ENCODE measurements at regions of chr1 and their contacts with region 1.

Region 1: GRCh38 chr1:100249537-100250257 is at the start of gene DBT:
- DNase-seq: peak; percentile 86 to 98
- H3K4me3 ChIP-seq: peak within 1 kb of the TSS; percentile 57 to 85
- H3K27ac ChIP-seq: peak within 1 kb of the TSS; percentile 85 to 86
- H3K4me1 ChIP-seq: no peaks in the 10 kb centered on the region
- H3K27me3 ChIP-seq: no peaks in the 10 kb centered on the region
- CTCF ChIP-seq: no peak
- total RNA-seq, gene DBT: 2.3 TPM

Region 2: DNA sequence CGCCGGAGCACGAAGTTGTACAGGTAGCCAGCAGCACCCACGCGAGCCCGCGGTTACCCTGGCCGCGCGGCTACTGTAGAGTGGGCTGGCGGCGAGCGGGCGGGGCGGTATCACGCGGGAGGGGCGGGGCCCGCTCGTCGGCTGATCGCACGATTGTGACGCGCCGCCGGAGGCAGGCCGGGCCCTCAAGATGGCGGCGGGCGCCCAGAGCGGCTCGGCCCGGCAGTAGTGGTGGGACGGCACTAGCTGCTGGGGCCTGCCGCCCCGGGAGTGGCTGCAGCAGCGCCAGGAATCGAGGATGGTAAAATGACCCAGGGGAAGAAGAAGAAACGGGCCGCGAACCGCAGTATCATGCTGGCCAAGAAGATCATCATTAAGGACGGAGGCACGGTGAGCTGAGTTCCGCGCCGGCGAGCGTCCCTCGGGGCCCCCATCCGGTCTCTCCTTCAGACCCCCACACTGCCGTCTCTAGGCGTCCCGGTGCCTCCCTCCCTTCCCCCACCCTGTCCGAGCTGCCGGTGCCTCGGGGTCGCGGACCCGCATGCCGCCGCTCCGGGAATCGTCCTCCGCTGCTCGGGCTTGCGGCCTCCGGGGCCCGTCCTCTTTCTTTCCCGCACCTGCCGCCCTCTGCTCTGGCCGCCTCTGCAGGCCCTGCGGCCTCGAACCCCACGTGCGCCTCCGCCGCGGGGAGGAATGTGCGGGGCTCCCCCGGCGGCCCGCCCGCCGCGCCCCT is 211.6 kb before region 1 on chr1:
- intact Hi-C with region 1: loop called (anchors 1 kb)
- DNase-seq: peak; percentile 59 to 95
- H3K4me3 ChIP-seq: peak overlapping the region; percentile 93 to 94
- H3K27ac ChIP-seq: peak overlapping the region; percentile 97 to 98
- H3K4me1 ChIP-seq: peaks cover 4 to 9% of the 10 kb centered on the region in 2 donors
- H3K27me3 ChIP-seq: no peaks in the 10 kb centered on the region
- CTCF ChIP-seq: no peak

Region 3: GRCh38 chr1:100265931-100266740 is 16.4 kb after region 1 on chr1 and contains the start of gene RTCA:
- intact Hi-C with region 1: loop called (anchors 1 kb)
- DNase-seq: peak; percentile 84 to 98
- H3K4me3 ChIP-seq: peak within 1 kb of the TSS; percentile 92 to 98
- H3K27ac ChIP-seq: peak within 1 kb of the TSS; percentile 76 to 84
- H3K4me1 ChIP-seq: peaks cover 3 to 17% of the 10 kb centered on the region in 2 donors
- H3K27me3 ChIP-seq: no peaks in the 10 kb centered on the region
- CTCF ChIP-seq: no peak
- total RNA-seq, gene RTCA: 2.8 TPM

Region 4: GRCh38 chr1:100895540-100896483 is 646.1 kb after region 1 on chr1 and contains the start of gene SLC30A7:
- intact Hi-C with region 1: loop called (anchors 2 kb)
- DNase-seq: peak; percentile 84 to 97
- H3K4me3 ChIP-seq: peak within 1 kb of the TSS; percentile 77 to 79
- H3K27ac ChIP-seq: peak within 1 kb of the TSS; percentile 96 to 97
- H3K4me1 ChIP-seq: peaks cover 0 to 13% of the 10 kb centered on the region in 2 donors
- H3K27me3 ChIP-seq: no peaks in the 10 kb centered on the region
- CTCF ChIP-seq: no peak
- total RNA-seq, gene SLC30A7: 12.1 TPM